Heart right ventricle (tissue), 16 donors: ENCODE measurements at regions of chr16 and their contacts with region 1.

Region 1: DNA sequence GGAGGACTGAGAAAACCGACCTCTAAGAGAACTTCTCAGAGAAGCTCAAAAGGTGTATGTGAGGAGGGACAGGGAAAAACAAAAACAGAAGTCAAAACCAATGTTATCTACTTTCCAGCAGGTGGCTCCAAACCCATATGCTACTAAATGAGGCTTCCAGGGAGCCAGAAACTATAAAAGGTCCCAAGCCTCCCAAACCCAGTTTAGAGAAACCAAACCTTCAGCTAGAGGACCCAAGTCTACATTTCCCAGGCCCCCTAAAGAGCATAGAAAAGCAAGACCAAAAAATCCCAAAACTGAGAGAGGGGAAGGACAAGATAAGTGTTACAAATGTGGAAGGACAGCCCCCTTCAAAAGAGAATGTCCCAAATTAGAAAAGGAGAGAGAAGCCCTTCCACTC is 3.7 kb downstream of the HPR start:
- DNase-seq: peak in 1 of 2 donors; percentile 16
- ATAC-seq: peak in 4 of 8 donors; percentile 62 to 77 (median 69)
- H3K4me3 ChIP-seq: no peak overlapping the region
- H3K27ac ChIP-seq: peak overlapping the region in 1 of 10 donors; percentile 12
- H3K4me1 ChIP-seq: peaks cover 0 to 21% (median 4%) of the 10 kb centered on the region in 9 donors
- H3K27me3 ChIP-seq: no peaks in the 10 kb centered on the region
- CTCF ChIP-seq: peak; percentile 8 to 69 (median 61)

Region 2: DNA sequence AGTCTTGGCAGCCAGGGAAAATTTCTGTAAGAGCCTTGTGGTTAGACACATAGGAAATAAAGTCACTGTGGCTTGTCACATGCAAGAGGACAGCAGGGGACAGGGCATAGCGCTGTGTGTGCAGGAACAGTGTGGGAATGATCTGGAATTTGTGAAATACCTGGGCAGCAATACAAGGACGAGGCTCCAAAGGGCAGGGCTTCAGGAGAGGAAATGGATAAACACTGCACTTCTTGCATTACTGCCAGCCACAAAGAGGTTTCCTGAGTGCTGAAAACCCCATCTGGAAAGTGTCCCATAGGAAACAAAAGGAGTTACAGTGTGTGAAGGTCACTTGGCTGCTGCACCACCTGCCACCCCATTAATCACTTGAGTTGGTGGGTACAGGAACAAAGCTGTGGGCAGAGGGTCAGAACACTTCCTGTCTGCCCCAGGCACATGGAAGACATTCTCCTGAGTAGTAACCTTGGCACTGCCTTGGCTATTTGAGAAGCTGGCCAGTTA is 24.5 kb before region 1 on chr16:
- intact Hi-C with region 1: no loop called
- DNase-seq: no peak
- ATAC-seq: peak in 5 of 8 donors; percentile 45 to 85 (median 78)
- H3K4me3 ChIP-seq: no peak overlapping the region
- H3K27ac ChIP-seq: peak overlapping the region in 2 of 10 donors; percentile 8 to 10
- H3K4me1 ChIP-seq: peaks cover 0 to 8% (median 5%) of the 10 kb centered on the region in 9 donors
- H3K27me3 ChIP-seq: no peaks in the 10 kb centered on the region
- CTCF ChIP-seq: no peak

Region 3: GRCh38 chr16:72093448-72094265 is 26.9 kb after region 1 on chr16 and contains the starts of genes DHX38 and TXNL4B:
- intact Hi-C with region 1: loop called in 4 of 10 experiments (anchors 1 to 2 kb)
- DNase-seq: peak; percentile 87 to 97
- ATAC-seq: peak; percentile 99 to 100 (median 99)
- H3K4me3 ChIP-seq: peak within 1 kb of the TSS; percentile 82 to 99 (median 90)
- H3K27ac ChIP-seq: peak within 1 kb of the TSS; percentile 74 to 95 (median 92)
- H3K4me1 ChIP-seq: peaks cover 0 to 46% (median 33%) of the 10 kb centered on the region in 9 donors
- H3K27me3 ChIP-seq: no peaks in the 10 kb centered on the region
- CTCF ChIP-seq: no peak
- total RNA-seq, gene DHX38: 29.1 to 46.5 (median 36.6) TPM
- total RNA-seq, gene TXNL4B: 3.2 to 11.7 (median 5.9) TPM

Region 4: GRCh38 chr16:72099377-72099818 is 32.7 kb after region 1 on chr16:
- intact Hi-C with region 1: loop called in 9 of 10 experiments (anchors 1 to 5 kb)
- DNase-seq: peak in 1 of 2 donors; percentile 34
- ATAC-seq: peak; percentile 40 to 90 (median 81)
- H3K4me3 ChIP-seq: no peak overlapping the region
- H3K27ac ChIP-seq: no peak overlapping the region
- H3K4me1 ChIP-seq: peaks cover 0 to 16% (median 12%) of the 10 kb centered on the region in 9 donors
- H3K27me3 ChIP-seq: no peaks in the 10 kb centered on the region
- CTCF ChIP-seq: peak; percentile 13 to 68 (median 60)

Region 5: GRCh38 chr16:72104905-72105304 is 38.2 kb after region 1 on chr16:
- intact Hi-C with region 1: loop called in 4 of 10 experiments (anchors 1 to 5 kb)
- DNase-seq: no peak
- ATAC-seq: no peak
- H3K4me3 ChIP-seq: no peak overlapping the region
- H3K27ac ChIP-seq: no peak overlapping the region
- H3K4me1 ChIP-seq: no peaks in the 10 kb centered on the region
- H3K27me3 ChIP-seq: no peaks in the 10 kb centered on the region
- CTCF ChIP-seq: no peak

Region 6: DNA sequence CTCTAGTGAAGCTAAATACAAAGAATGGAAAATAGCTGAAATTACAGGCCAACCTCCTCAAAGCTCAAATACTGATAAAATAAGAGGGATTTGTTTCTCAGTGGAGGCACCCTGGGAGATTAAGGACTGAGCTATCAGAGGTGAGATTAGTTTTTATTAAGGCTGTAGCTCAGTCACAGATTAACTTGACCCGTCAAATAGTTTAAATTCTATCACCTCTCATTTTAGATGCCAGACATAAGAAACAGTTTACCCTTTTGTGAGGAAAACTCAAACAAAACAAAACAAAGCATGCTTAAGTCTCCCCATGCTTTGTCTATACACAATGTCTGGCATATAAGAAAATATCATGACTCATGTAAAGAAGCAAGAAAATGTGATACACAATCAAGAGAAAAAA is 313.5 kb after region 1 on chr16:
- intact Hi-C with region 1: no loop called
- DNase-seq: no peak
- ATAC-seq: no peak
- H3K4me3 ChIP-seq: no peak overlapping the region
- H3K27ac ChIP-seq: no peak overlapping the region
- H3K4me1 ChIP-seq: no peaks in the 10 kb centered on the region
- H3K27me3 ChIP-seq: no peaks in the 10 kb centered on the region
- CTCF ChIP-seq: no peak